ENCODE measurements at regions of chr4 and their contacts with region 1.

Region 1: GRCh38 chr4:53015681-53016080 is 153.6 kb downstream of the RASL11B start:
- DNase-seq: no peak
- H3K4me3 ChIP-seq: no peak overlapping the region
- H3K27ac ChIP-seq: no peak overlapping the region
- H3K27me3 ChIP-seq: no peaks in the 10 kb centered on the region
- CTCF ChIP-seq: peak; percentile 80

Region 2: DNA sequence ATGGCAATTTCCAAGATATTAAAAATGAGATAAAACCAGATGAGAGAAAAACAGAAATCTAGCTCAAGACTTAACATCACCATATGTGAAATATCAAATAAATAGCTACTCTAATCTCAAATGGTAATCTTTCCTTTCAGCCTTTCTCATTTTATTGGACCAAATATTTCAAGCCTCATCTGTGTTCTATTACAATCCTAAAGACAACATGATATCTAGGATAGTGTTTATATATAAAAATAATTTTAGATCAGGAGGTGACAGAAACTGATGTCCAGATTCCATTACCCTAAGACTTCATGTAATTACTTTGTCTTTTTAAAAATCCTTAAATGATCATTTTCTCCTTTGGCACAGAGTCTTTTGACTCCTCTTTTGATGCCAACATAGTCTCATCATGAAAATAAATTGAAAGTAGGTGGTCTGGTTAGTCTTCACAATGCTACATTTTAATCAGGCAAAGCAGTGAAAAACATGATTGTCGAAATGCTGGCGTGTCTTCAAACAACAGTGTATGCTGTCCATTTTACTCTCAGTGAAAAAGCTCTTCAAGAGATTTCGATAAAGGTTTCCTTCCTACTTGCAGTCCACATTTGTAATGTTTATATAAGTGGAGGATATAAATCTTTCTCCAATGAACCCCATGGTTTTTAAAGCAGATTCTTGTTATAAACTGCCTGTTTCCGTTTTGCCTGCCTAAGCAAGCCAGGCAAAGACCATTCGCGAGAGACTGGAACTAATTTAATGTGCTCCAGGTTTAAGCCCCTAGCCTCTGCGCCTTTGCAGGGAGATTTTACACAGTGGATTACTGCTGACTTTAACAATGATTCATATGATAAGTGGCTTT is 180.4 kb after region 1 on chr4:
- CTCF ChIA-PET with region 1: interaction called, 21 read pairs
- POLR2A ChIA-PET with region 1: no interaction called
- DNase-seq: no peak
- H3K4me3 ChIP-seq: peak overlapping the region; percentile 17; the same call in 1 of the 2 replicates
- H3K27ac ChIP-seq: no peak overlapping the region
- H3K27me3 ChIP-seq: no peaks in the 10 kb centered on the region
- CTCF ChIP-seq: no peak

Region 3: DNA sequence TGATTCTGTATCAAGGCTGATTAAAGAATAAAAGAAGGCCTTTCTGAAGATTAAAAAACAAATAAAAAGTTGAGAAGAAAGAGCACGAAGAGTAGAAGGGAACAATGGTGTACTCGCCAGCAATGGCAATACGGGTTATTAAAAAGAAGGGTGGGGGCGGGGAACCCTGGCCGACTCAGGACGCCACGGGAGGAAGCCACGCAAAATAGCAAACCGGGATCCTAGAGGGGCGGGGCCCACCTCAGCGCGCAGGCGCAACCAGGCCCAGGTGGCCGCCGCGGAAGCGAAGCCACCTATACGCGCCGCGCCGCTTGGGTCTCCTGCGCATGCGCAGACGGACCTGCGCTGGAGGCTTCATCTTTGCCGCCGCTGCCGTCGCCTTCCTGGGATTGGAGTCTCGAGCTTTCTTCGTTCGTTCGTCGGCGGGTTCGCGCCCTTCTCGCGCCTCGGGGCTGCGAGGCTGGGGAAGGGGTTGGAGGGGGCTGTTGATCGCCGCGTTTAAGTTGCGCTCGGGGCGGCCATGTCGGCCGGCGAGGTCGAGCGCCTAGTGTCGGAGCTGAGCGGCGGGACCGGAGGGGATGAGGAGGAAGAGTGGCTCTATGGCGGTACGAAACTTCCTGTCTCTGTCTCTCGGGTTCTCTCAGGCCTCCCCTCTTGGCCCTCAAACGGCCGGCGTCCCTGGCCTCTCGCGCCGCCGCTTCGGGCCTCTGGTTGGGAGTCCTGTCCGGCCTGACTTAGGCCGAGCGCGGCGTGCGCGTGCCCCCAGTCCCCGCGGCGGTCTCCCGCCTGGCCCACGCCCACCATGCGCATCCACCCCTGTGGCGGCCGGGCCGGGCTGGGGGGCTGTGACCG is 361.9 kb after region 1 on chr4 and contains the start of gene FIP1L1:
- CTCF ChIA-PET with region 1: interaction called, 17 read pairs
- POLR2A ChIA-PET with region 1: no interaction called
- DNase-seq: peak; percentile 71
- H3K4me3 ChIP-seq: peak within 1 kb of the TSS; percentile 80
- H3K27ac ChIP-seq: peak within 1 kb of the TSS; percentile 66
- H3K27me3 ChIP-seq: no peaks in the 10 kb centered on the region
- CTCF ChIP-seq: no peak
- polyA plus RNA-seq, gene FIP1L1: 28.3 and 30.5 TPM in 2 replicates

Region 4: GRCh38 chr4:54233277-54233696 is 1217.6 kb after region 1 on chr4:
- CTCF ChIA-PET with region 1: interaction called, 45 read pairs
- POLR2A ChIA-PET with region 1: interaction called, 4 read pairs
- DNase-seq: peak; percentile 61
- H3K4me3 ChIP-seq: peak overlapping the region; percentile 97
- H3K27ac ChIP-seq: peak overlapping the region; percentile 73
- H3K27me3 ChIP-seq: no peaks in the 10 kb centered on the region
- CTCF ChIP-seq: peak; percentile 72